ENCODE measurements at regions of chr15 and their contacts with region 1.

Region 1: DNA sequence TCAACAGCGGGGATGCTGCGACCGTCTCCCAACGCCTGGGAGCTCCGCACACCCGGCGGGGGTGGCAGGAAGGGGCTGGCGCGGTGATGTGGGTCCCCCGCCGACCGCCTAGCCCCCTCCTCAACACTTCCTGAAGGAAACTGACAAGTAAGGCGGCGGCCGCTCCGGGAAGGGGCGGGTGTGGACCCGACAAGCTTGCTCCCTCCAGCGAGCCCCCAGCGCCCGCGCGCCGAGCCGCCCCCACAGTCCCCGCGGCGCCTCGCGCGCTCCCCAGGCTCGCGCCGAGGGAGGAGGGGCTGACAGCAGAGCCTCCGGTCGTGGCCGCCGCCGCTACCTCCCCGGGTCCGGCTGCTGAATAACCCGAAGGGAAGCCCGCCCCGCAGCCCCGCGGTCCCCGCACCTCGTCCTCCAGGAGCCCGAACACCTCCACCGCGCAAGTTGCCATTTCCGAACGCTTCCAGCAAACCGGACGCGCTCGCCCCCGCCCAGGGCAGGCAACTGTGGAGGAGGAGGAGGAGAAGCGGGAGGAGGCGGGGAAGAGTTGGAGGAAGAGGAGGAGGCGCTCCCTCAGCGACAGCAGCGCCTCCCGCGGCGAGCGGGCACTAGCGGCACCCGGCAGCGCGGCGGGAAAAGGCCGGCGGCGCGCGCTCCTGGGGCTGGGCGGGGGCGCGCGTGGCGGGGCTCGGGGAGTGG is at the start of gene NEDD4:
- DNase-seq: peak; percentile 28 to 87 (median 69)
- ATAC-seq: peak; percentile 81
- H3K4me3 ChIP-seq: peak within 1 kb of the TSS; percentile 77 to 90
- H3K4me3 Mint-ChIP-seq: peak within 1 kb of the TSS; percentile 92
- H3K27ac ChIP-seq: no peak within 1 kb of the TSS
- H3K27ac Mint-ChIP-seq: peak within 1 kb of the TSS; percentile 25
- H3K4me1 ChIP-seq: peaks cover 5% of the 10 kb centered on the region
- H3K4me1 Mint-ChIP-seq: peaks cover 13% of the 10 kb centered on the region
- H3K27me3 ChIP-seq: no peaks in the 10 kb centered on the region
- H3K27me3 Mint-ChIP-seq: no peaks in the 10 kb centered on the region
- CTCF ChIP-seq: no peak
- total RNA-seq, gene NEDD4: 0.89 to 1.4 TPM

Region 2: GRCh38 chr15:55372701-55373440 is 620.4 kb before region 1 on chr15:
- CTCF ChIA-PET with region 1: no interaction called
- POLR2A ChIA-PET with region 1: no interaction called
- intact Hi-C with region 1: no loop called
- DNase-seq: no peak
- ATAC-seq: no peak
- H3K4me3 ChIP-seq: no peak overlapping the region
- H3K4me3 Mint-ChIP-seq: no peak overlapping the region
- H3K27ac ChIP-seq: no peak overlapping the region
- H3K27ac Mint-ChIP-seq: peak overlapping the region; percentile 29
- H3K4me1 ChIP-seq: no peaks in the 10 kb centered on the region
- H3K4me1 Mint-ChIP-seq: no peaks in the 10 kb centered on the region
- H3K27me3 ChIP-seq: no peaks in the 10 kb centered on the region
- H3K27me3 Mint-ChIP-seq: no peaks in the 10 kb centered on the region
- CTCF ChIP-seq: no peak

Region 3: DNA sequence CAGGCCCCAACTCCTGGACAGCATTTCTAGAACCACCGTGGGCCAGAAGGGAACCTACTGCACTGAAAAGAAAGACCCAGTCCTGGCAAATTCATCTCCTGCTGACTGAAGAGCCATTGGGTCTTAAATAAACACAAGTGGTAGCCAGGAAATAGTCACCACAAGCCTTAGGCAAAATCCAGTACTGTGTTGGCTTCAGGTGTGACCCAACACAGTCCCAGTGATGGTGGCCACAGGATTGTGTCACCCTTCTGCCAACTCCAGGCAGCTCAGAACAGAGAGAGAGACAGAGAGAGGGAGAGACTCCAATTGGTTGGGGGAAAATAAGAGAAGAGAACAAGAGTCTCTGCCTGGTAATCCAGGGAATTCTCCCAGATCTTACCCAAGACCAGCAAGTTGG is 23.0 kb before region 1 on chr15:
- CTCF ChIA-PET with region 1: no interaction called
- POLR2A ChIA-PET with region 1: no interaction called
- intact Hi-C with region 1: loop called in 1 of 2 experiments (anchors 2 kb)
- DNase-seq: no peak
- ATAC-seq: no peak
- H3K4me3 ChIP-seq: no peak overlapping the region
- H3K4me3 Mint-ChIP-seq: no peak overlapping the region
- H3K27ac ChIP-seq: no peak overlapping the region
- H3K27ac Mint-ChIP-seq: no peak overlapping the region
- H3K4me1 ChIP-seq: no peaks in the 10 kb centered on the region
- H3K4me1 Mint-ChIP-seq: no peaks in the 10 kb centered on the region
- H3K27me3 ChIP-seq: no peaks in the 10 kb centered on the region
- H3K27me3 Mint-ChIP-seq: no peaks in the 10 kb centered on the region
- CTCF ChIP-seq: no peak

Region 4: DNA sequence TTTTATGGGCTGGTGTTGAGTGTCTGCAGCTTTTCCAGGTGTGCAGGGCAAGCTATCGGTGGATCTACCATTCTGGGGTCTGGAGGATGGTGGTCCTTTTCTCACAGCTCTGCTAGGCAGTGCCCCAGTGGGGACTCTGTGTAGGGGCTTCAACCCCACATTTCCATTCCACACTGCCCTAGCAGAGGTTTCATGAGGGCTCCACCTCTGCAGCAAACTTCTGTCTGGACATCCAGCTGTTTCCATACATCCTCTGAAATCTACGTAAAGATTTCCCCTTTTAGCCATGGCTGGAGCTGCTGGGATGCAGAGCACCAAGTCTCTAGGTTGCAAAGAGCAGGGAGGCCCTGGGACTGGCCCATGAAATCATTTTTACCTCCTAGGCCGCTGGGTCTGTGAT is 238.8 kb after region 1 on chr15:
- CTCF ChIA-PET with region 1: no interaction called
- POLR2A ChIA-PET with region 1: no interaction called
- intact Hi-C with region 1: no loop called
- DNase-seq: no peak
- ATAC-seq: no peak
- H3K4me3 ChIP-seq: no peak overlapping the region
- H3K4me3 Mint-ChIP-seq: no peak overlapping the region
- H3K27ac ChIP-seq: no peak overlapping the region
- H3K27ac Mint-ChIP-seq: no peak overlapping the region
- H3K4me1 ChIP-seq: peaks cover 3% of the 10 kb centered on the region
- H3K4me1 Mint-ChIP-seq: peaks cover 18% of the 10 kb centered on the region
- H3K27me3 ChIP-seq: no peaks in the 10 kb centered on the region
- H3K27me3 Mint-ChIP-seq: no peaks in the 10 kb centered on the region
- CTCF ChIP-seq: no peak

Region 5: GRCh38 chr15:56285981-56286612 is 292.8 kb after region 1 on chr15:
- CTCF ChIA-PET with region 1: no interaction called
- POLR2A ChIA-PET with region 1: no interaction called
- intact Hi-C with region 1: no loop called
- DNase-seq: no peak
- ATAC-seq: no peak
- H3K4me3 ChIP-seq: no peak overlapping the region
- H3K4me3 Mint-ChIP-seq: no peak overlapping the region
- H3K27ac ChIP-seq: no peak overlapping the region
- H3K27ac Mint-ChIP-seq: no peak overlapping the region
- H3K4me1 ChIP-seq: no peaks in the 10 kb centered on the region
- H3K4me1 Mint-ChIP-seq: no peaks in the 10 kb centered on the region
- H3K27me3 ChIP-seq: peaks cover 0 to 3% of the 10 kb centered on the region in 2 experiments
- H3K27me3 Mint-ChIP-seq: no peaks in the 10 kb centered on the region
- CTCF ChIP-seq: no peak